Activated B cell treated with CpG ODN at 0.5 μM for 24 hours (primary cell): ENCODE measurements at regions of chr2 and their contacts with region 1.

Region 1: DNA sequence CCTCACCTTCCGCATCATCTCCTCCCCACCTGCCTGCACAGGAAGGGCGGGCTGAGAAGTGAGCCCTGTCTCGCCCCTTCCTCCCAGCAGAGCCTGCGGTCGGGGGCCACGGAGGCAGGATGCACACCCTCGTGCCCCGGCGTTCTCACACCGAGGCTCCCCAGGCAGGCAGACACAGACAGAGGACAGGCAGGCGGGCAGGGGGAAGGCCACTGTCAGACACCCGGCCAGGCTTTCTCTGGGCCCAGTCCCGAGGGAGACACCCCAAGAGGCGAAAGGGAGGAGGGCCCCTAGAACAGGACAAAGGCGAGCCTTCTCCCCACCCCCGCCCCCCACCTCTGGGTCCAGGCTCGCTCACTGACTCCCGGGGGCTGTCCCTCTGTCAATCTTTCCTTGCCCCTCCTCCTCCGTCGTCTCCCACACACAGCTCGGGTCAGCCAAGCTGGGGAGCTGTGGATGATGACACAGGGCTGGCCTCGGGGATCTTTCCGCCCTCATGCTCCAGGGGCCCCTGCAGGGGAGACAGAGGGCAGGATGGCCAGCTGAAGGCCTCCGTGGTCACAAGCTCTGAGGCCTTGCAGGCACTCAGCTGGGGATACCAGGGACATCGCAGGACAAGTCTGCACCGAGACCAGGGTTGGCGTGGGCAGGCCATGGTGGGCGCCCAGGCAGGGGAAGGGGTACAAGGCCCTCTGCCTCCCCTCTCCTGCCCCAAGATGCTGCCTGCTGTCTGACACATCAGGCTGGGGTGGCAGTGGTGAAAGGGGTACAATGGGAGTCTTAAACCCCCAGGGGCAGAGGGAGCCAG is 24.9 kb downstream of the BIN1 start:
- DNase-seq: peak; percentile 59
- ATAC-seq: peak; percentile 66
- H3K4me3 Mint-ChIP-seq: peak overlapping the region; percentile 84
- H3K27ac Mint-ChIP-seq: peak overlapping the region; percentile 95
- H3K4me1 Mint-ChIP-seq: peaks cover 92% of the 10 kb centered on the region
- H3K27me3 Mint-ChIP-seq: no peaks in the 10 kb centered on the region
- CTCF ChIP-seq: no peak

Region 2: GRCh38 chr2:126657636-126658318 is 424.3 kb before region 1 on chr2:
- CTCF ChIA-PET with region 1: no interaction called
- POLR2A ChIA-PET with region 1: no interaction called
- intact Hi-C with region 1: loop called (anchors 5 kb)
- DNase-seq: peak; percentile 40
- ATAC-seq: peak; percentile 69
- H3K4me3 Mint-ChIP-seq: peak overlapping the region; percentile 94
- H3K27ac Mint-ChIP-seq: peak overlapping the region; percentile 94
- H3K4me1 Mint-ChIP-seq: peaks cover 68% of the 10 kb centered on the region
- H3K27me3 Mint-ChIP-seq: no peaks in the 10 kb centered on the region
- CTCF ChIP-seq: no peak

Region 3: GRCh38 chr2:127106951-127107621 is 25.1 kb after region 1 on chr2 and contains the start of gene BIN1:
- CTCF ChIA-PET with region 1: interaction called, 4 read pairs
- POLR2A ChIA-PET with region 1: interaction called, 7 read pairs
- intact Hi-C with region 1: loop called (anchors 1 kb)
- DNase-seq: peak; percentile 75
- ATAC-seq: peak; percentile 89
- H3K4me3 Mint-ChIP-seq: peak within 1 kb of the TSS; percentile 86
- H3K27ac Mint-ChIP-seq: no peak within 1 kb of the TSS
- H3K4me1 Mint-ChIP-seq: peaks cover 13% of the 10 kb centered on the region
- H3K27me3 Mint-ChIP-seq: peaks cover 8% of the 10 kb centered on the region
- CTCF ChIP-seq: no peak
- total RNA-seq, gene BIN1: 62.5 and 63.5 TPM in 2 replicates

Region 4: DNA sequence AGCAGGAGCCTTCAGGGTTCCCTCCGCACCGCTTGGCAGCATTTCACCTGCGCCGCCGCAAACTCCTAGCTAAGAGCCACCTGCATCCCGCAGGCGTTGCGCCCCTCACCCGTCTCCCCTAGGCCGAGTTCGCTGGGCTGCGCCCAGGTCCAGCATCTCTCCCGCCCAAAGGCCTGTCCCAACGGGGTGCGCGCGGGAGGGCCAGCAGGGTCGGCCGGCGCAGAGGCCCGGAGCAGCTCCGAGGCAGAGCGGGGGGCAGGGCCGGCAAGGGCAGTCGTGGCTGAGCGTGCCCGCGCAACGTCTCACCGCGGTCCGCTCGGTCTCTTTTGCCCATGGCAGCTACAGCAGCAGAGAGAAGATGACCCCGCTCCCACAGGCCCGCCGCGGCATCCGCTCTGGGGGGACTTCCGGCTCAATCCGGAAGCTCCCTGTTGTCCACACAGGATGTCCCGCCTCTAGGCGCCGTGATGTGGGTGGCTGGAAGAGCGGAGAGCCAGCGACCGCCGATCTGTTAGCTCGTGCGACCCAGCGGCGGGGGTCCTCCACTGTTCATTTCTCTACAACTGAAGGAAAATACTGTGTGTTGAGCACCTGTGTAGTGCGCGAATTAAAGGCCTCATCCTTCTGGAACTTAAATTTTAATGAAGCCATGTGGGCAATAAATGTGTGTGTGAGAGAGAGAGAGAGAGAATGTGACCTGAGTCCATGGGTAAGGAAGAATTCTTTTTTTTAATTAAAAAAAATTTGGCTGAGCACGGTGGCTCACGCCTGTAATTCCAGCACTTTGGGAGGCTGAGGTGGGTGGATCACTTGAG is 211.9 kb after region 1 on chr2 and contains the start of gene ERCC3:
- CTCF ChIA-PET with region 1: no interaction called
- POLR2A ChIA-PET with region 1: interaction called, 8 read pairs
- intact Hi-C with region 1: loop called (anchors 1 kb)
- DNase-seq: peak; percentile 78
- ATAC-seq: peak; percentile 98
- H3K4me3 Mint-ChIP-seq: peak within 1 kb of the TSS; percentile 97
- H3K27ac Mint-ChIP-seq: peak within 1 kb of the TSS; percentile 95
- H3K4me1 Mint-ChIP-seq: peaks cover 25% of the 10 kb centered on the region
- H3K27me3 Mint-ChIP-seq: no peaks in the 10 kb centered on the region
- CTCF ChIP-seq: no peak
- total RNA-seq, gene ERCC3: 55.9 and 65.6 TPM in 2 replicates

Region 5: DNA sequence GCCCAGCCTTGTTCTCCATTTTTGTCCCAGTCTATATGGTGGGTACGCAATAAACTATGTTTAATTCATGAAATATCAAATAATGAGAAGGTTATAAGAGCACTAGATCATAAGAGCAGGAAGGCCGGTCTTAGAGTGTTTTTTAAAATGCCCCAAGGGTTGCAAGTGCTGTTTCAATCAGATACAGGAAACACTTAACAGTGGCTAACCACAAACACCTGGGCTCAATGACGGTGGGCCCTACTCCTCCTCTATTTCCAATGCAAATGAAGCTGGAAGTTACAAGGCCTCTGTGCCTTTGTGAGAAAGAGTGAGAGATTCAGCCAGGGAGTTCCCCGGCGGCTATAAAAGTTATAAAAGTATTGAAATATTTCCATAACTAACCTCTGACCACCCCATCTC is 747.8 kb after region 1 on chr2:
- CTCF ChIA-PET with region 1: no interaction called
- POLR2A ChIA-PET with region 1: interaction called, 11 read pairs
- intact Hi-C with region 1: no loop called
- DNase-seq: peak; percentile 57
- ATAC-seq: peak; percentile 94
- H3K4me3 Mint-ChIP-seq: peak overlapping the region; percentile 66
- H3K27ac Mint-ChIP-seq: peak overlapping the region; percentile 84
- H3K4me1 Mint-ChIP-seq: peaks cover 43% of the 10 kb centered on the region
- H3K27me3 Mint-ChIP-seq: peaks cover 12% of the 10 kb centered on the region
- CTCF ChIP-seq: no peak